Tibial artery (tissue), 4 donors: ENCODE measurements at regions of chr1 and their contacts with region 1.

Region 1: GRCh38 chr1:163195728-163196448 is 6.8 kb downstream of the RGS5 start:
- DNase-seq: no peak
- H3K4me3 ChIP-seq: peak overlapping the region; percentile 54 to 55
- H3K27ac ChIP-seq: peak overlapping the region; percentile 74 to 86
- H3K4me1 ChIP-seq: peaks cover 0 to 81% (median 16%) of the 10 kb centered on the region in 4 donors
- H3K27me3 ChIP-seq: no peaks in the 10 kb centered on the region
- CTCF ChIP-seq: no peak

Region 2: GRCh38 chr1:163258181-163258580 is 62.3 kb after region 1 on chr1:
- intact Hi-C with region 1: loop called (anchors 10 kb)
- DNase-seq: no peak
- H3K4me3 ChIP-seq: no peak overlapping the region
- H3K27ac ChIP-seq: peak overlapping the region; percentile 68 to 77
- H3K4me1 ChIP-seq: peaks cover 0 to 23% (median 14%) of the 10 kb centered on the region in 4 donors
- H3K27me3 ChIP-seq: no peaks in the 10 kb centered on the region
- CTCF ChIP-seq: no peak

Region 3: GRCh38 chr1:163436140-163436812 is 240.4 kb after region 1 on chr1:
- intact Hi-C with region 1: no loop called
- DNase-seq: no peak
- H3K4me3 ChIP-seq: no peak overlapping the region
- H3K27ac ChIP-seq: no peak overlapping the region
- H3K4me1 ChIP-seq: no peaks in the 10 kb centered on the region
- H3K27me3 ChIP-seq: peaks cover 0 to 7% of the 10 kb centered on the region in 2 donors
- CTCF ChIP-seq: no peak